Activated B cell treated with CpG ODN at 0.5 μM for 24 hours (primary cell): ENCODE measurements at regions of chr5 and their contacts with region 1.

Region 1: DNA sequence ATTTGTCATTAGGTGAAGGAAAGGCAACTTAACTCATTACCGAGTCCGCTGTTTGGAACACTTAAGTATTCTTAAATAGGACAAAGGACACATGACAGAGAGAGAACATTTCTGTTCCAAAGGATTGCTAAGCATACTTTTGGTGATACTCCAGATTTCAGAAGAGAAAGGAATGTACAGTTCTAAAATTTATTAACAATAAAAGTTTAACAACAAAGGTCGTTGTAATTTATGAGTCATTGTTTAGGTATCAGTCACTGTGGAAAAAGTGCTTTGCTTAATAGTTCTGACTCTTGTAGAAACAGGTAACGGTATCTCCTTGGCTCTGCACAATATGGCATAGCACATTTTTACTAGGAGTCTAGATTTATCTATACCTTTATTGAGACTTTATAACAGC is 36.3 kb upstream of the PAM start:
- DNase-seq: no peak
- ATAC-seq: no peak
- H3K4me3 Mint-ChIP-seq: no peak overlapping the region
- H3K27ac Mint-ChIP-seq: no peak overlapping the region
- H3K4me1 Mint-ChIP-seq: no peaks in the 10 kb centered on the region
- H3K27me3 Mint-ChIP-seq: peaks cover 5% of the 10 kb centered on the region
- CTCF ChIP-seq: no peak

Region 2: GRCh38 chr5:102681407-102681983 is 37.3 kb before region 1 on chr5:
- CTCF ChIA-PET with region 1: no interaction called
- POLR2A ChIA-PET with region 1: no interaction called
- intact Hi-C with region 1: loop called (anchors 1 kb)
- DNase-seq: no peak
- ATAC-seq: peak; percentile 31
- H3K4me3 Mint-ChIP-seq: no peak overlapping the region
- H3K27ac Mint-ChIP-seq: no peak overlapping the region
- H3K4me1 Mint-ChIP-seq: no peaks in the 10 kb centered on the region
- H3K27me3 Mint-ChIP-seq: no peaks in the 10 kb centered on the region
- CTCF ChIP-seq: no peak

Region 3: GRCh38 chr5:102971697-102972293 is 253.0 kb after region 1 on chr5:
- CTCF ChIA-PET with region 1: no interaction called
- POLR2A ChIA-PET with region 1: no interaction called
- intact Hi-C with region 1: no loop called
- DNase-seq: no peak
- ATAC-seq: no peak
- H3K4me3 Mint-ChIP-seq: no peak overlapping the region
- H3K27ac Mint-ChIP-seq: no peak overlapping the region
- H3K4me1 Mint-ChIP-seq: no peaks in the 10 kb centered on the region
- H3K27me3 Mint-ChIP-seq: no peaks in the 10 kb centered on the region
- CTCF ChIP-seq: no peak